Activated CD4-positive, alpha-beta T cell treated with anti-CD3 and anti-CD28 coated beads, Interleukin-2, amount 10 ng/mL, durations not matched to agents 24 days and 14 days (primary cell): ENCODE measurements at regions of chr9 and their contacts with region 1.

Region 1: DNA sequence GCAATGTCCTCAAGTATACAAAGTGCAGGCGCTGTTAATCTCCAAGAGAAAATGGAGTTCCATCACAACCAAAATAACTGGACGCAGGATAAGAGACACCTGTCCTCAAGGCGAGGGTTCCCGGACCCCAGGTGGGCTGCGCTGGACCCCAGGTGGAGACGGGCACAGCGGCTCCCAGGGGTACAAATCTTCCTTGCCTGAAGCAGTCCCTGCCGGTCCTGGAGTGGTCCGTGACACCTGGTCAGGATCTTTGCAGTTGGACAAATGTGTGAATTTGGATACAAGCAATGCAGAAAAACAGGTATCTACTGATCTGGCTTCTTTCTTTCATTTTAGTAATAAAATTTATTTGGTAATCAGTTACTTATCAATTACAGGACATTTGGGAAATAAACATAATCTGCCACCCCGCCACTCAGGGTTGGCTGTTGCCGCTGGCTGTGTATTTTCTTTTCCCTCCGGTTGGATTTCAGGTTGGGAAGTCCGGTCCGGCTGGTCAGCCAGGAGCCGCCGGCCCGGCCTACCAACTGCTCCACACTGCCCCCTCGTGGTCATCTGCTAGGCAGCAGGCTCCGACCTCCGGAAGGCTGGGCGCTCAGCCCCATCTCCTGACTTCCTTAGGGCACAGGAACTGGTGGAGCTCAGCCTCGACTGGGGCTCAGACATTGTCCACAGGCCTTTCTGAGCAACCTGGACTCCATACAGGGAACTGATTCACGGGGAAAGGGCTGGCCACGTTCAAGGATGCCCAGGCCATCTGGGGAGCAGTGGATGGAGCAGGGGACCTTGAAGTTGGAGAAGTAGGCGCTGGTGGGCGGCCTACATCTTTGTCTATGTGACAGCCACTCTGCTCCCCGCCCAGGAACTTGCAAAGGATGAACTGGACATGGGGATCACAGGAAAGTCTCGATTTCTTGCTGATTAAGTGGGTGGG is 43.4 kb downstream of the NXNL2 start:
- DNase-seq: peak; percentile 91
- H3K4me3 Mint-ChIP-seq: peak overlapping the region; percentile 70
- H3K27ac Mint-ChIP-seq: no peak overlapping the region
- H3K4me1 Mint-ChIP-seq: peaks cover 6% of the 10 kb centered on the region
- H3K27me3 Mint-ChIP-seq: peaks cover 20% of the 10 kb centered on the region

Region 2: GRCh38 chr9:87678650-87679515 is 899.5 kb before region 1 on chr9:
- intact Hi-C with region 1: loop called (anchors 10 kb)
- DNase-seq: peak; percentile 72
- H3K4me3 Mint-ChIP-seq: no peak overlapping the region
- H3K27ac Mint-ChIP-seq: no peak overlapping the region
- H3K4me1 Mint-ChIP-seq: peaks cover 3% of the 10 kb centered on the region
- H3K27me3 Mint-ChIP-seq: peaks cover 2% of the 10 kb centered on the region

Region 3: DNA sequence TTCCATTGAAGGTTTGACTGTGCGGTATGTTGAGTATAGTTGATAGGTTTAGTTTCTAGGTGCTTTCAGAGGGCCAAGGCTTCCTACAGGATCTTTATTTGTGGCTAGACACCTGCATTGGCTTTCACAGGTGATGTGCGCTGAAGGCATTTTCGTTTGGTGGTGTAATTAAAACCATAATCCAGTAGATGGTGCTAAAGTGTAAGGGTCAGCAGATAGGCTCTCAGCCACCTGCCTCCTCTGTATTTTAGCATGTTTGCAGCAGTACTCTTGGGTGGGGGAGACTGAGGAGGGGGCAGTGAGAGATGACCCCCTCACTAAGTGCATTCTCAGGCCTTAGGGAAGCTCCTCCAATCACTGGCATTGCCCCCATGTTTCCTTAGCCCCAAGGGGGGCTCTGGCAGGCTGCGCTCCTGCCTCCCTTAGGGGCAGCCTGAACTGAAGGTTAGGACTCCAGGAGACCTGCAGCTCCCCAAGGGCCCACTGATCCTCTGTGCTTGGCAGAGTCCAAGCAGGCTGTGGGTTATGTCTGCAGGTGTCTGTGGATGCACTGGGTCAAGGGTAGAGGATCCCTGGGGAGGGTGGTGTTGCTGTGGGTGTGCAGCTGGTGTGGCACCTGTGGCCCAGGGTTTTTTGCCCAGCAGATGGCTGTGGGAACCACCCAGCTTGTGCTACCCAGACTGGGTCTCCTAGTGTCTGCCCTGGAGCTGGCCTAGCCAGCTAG is 627.5 kb before region 1 on chr9:
- intact Hi-C with region 1: loop called (anchors 2 kb)
- DNase-seq: peak; percentile 68
- H3K4me3 Mint-ChIP-seq: no peak overlapping the region
- H3K27ac Mint-ChIP-seq: no peak overlapping the region
- H3K4me1 Mint-ChIP-seq: peaks cover 2% of the 10 kb centered on the region
- H3K27me3 Mint-ChIP-seq: peaks cover 25% of the 10 kb centered on the region

Region 4: GRCh38 chr9:88106491-88106890 is 471.9 kb before region 1 on chr9:
- intact Hi-C with region 1: loop called (anchors 1 kb)
- DNase-seq: peak; percentile 77
- H3K4me3 Mint-ChIP-seq: no peak overlapping the region
- H3K27ac Mint-ChIP-seq: no peak overlapping the region
- H3K4me1 Mint-ChIP-seq: peaks cover 2% of the 10 kb centered on the region
- H3K27me3 Mint-ChIP-seq: peaks cover 35% of the 10 kb centered on the region

Region 5: GRCh38 chr9:88173378-88173999 is 404.9 kb before region 1 on chr9:
- intact Hi-C with region 1: loop called (anchors 1 kb)
- DNase-seq: peak; percentile 82
- H3K4me3 Mint-ChIP-seq: no peak overlapping the region
- H3K27ac Mint-ChIP-seq: no peak overlapping the region
- H3K4me1 Mint-ChIP-seq: peaks cover 5% of the 10 kb centered on the region
- H3K27me3 Mint-ChIP-seq: peaks cover 33% of the 10 kb centered on the region

Region 6: GRCh38 chr9:88614359-88614758 is 36.0 kb after region 1 on chr9:
- intact Hi-C with region 1: no loop called
- DNase-seq: no peak
- H3K4me3 Mint-ChIP-seq: no peak overlapping the region
- H3K27ac Mint-ChIP-seq: no peak overlapping the region
- H3K4me1 Mint-ChIP-seq: no peaks in the 10 kb centered on the region
- H3K27me3 Mint-ChIP-seq: peaks cover 6% of the 10 kb centered on the region

Region 7: DNA sequence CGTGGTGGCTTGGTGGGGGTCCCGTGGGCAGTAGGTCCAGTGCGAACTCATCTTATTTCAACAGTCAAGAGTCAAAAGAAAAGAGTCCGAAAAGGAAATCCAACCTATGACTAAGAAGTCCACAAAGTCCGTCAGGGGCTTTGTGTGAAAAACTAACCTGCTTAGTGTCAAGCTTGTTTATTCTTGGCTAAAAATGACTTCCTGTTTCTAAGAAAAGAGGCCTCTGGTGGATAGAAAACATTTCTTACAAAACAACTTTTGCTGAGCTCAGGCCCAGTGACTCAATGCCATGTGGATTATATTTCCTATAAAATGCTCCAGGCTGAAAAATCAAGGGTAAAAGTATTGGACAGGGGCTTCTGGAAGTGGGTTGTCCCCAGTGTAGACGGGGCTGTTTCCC is 1132.3 kb after region 1 on chr9:
- intact Hi-C with region 1: no loop called
- DNase-seq: no peak
- H3K4me3 Mint-ChIP-seq: peak overlapping the region; percentile 50
- H3K27ac Mint-ChIP-seq: peak overlapping the region; percentile 81
- H3K4me1 Mint-ChIP-seq: peaks cover 75% of the 10 kb centered on the region
- H3K27me3 Mint-ChIP-seq: no peaks in the 10 kb centered on the region